ENCODE measurements at regions of chr9 and their contacts with region 1.

Region 1: DNA sequence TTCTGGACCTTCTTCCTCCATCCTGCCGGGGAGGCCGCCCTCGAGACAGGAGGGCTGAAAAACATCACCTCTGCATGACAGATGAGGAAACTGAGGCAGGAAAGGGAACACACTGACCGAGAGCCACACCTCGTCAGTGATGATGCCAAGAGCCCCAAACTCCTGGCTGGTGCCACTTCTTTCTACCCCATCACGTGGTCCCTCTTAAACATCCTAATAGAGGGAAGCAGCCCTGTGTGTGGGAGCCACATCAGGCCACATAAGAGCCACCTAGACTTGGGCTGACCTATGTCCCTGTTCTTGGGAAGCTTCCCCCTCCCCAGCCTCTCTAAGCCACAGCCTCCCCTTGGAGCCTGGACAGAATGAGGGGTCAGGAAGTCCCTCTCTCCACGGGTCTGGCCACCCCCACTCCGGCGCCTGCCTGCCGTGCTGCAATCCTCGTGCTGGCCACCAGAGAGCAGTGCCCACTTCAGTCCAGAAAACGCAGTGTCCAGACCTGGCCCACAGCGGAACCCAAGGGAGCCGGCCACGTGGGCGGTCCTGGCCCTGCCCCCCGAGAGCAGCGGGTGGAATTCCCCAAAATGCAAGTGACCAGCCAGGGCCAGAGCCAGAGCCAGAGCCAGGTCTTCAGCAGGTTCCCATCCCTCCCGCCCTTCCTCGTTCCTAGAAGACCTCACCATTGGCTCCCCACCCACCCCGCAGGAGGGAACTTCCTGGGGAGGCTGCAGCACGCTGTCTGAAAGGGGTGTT is 54.7 kb upstream of the SARDH start:
- DNase-seq: peak; percentile 71

Region 2: GRCh38 chr9:133716564-133717112 is 76.3 kb before region 1 on chr9:
- in situ Hi-C with region 1: no loop called
- DNase-seq: no peak

Region 3: GRCh38 chr9:133889584-133890301 is 96.8 kb after region 1 on chr9:
- in situ Hi-C with region 1: no loop called
- DNase-seq: no peak

Region 4: DNA sequence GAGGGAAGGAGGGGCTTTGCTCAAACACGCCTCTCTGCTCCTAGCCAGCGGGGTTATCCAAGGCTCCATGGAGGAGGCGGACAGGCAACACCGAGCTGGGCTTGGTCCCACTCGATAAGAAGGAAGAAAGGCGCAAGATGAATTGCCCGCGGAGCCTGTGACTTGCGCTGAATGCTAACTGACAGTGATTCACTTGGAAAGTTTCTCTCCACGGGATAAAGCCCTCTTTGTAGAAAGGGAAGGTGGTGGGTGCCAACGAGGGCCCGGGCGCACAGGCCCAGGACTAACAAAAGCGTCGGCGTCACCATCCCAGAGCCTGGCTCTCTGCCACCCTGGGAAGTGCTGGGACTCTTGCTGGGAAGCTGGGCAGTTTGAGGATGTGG is 123.3 kb after region 1 on chr9:
- in situ Hi-C with region 1: no loop called
- DNase-seq: peak; percentile 87

Region 5: GRCh38 chr9:134024828-134025605 is 232.1 kb after region 1 on chr9 and contains the start of gene BRD3OS:
- in situ Hi-C with region 1: loop called (anchors 25 kb)
- DNase-seq: peak; percentile 100
- total RNA-seq, gene BRD3OS: 10.1 and 18.3 TPM in 2 replicates